Ovary (tissue), 10 donors: ENCODE measurements at regions of chr1 and their contacts with region 1.

Region 1: DNA sequence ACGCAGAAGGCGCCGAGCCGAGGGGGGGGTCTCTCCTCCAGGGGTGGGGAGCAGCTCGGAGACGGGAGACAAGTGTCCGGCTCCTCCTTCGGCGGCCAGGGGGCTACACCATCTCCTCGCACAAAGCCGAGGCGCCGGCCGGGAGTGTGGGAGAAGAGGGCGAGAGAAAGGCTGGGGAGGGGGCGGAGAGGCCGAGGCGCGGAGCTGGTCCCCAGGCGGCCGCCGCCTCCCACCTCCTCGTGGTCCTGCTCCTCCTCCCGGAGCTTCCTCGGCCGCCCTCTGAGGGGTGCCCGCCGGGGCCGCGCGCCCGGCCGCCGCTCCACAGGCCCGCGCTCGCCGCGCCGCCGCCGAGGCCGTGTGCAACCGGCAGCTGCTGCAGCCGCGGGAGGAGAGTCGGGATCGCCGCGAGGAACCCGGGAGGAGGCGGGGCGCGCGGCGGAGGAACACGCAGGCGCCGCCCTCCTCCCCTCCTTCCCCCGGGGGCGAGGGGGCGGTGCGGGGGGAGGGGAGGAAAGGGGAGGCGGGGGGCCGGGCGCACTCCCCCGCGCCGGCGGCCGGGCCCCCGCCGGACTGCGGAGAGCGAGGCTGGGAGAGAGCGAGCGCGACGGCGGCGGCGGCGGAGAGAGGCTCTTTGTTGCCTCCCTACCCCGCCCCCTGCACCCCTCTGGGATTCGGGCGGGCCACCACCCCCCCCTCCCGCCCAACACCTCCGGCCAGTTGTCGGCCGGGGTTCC is at the start of gene ENAH:
- DNase-seq: peak; percentile 87 to 92 (median 90)
- H3K4me3 ChIP-seq: peak within 1 kb of the TSS; percentile 94
- H3K27ac ChIP-seq: peak within 1 kb of the TSS; percentile 96 to 99
- H3K4me1 ChIP-seq: peaks cover 7% of the 10 kb centered on the region
- H3K27me3 ChIP-seq: no peaks in the 10 kb centered on the region
- CTCF ChIP-seq: peak in 2 of 3 donors; percentile 24 to 35
- EP300 ChIP-seq: no peak
- POLR2A ChIP-seq: peak; percentile 91
- total RNA-seq, gene ENAH: 33.4 to 112 (median 88.6) TPM

Region 2: GRCh38 chr1:225191199-225191753 is 461.6 kb before region 1 on chr1:
- intact Hi-C with region 1: no loop called
- DNase-seq: no peak
- H3K4me3 ChIP-seq: no peak overlapping the region
- H3K27ac ChIP-seq: no peak overlapping the region
- H3K4me1 ChIP-seq: no peaks in the 10 kb centered on the region
- H3K27me3 ChIP-seq: no peaks in the 10 kb centered on the region
- CTCF ChIP-seq: no peak
- EP300 ChIP-seq: no peak
- POLR2A ChIP-seq: no peak

Region 3: DNA sequence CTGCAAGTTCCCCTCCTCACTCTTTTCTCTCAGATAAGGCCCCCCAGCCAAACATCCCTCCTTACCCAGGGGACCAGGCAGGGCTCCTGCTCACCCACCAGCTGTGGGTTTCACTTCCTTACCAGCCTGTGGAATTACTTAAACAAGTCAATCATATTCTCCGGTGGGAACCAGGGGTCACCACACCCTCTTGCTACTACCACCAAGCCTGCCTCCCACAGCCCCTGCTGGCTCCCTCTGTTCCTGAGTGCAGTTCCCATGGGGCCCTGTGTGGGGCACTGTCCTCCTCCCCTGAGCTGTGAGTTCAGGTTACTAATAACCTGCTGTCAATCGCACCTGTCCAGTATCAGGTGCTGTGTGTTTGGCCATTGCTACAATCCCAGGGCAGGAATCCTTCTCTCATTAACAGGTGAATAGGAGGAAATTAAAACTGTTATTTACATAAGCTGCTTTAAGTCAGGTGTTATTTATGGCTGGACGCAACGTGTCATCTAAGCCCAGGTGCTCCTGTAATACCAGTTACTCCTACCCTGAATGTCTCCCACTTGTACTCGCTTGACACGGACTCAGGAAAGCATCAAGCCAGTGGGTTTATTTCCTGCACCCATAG is 172.0 kb before region 1 on chr1:
- intact Hi-C with region 1: loop called in 2 of 4 experiments (anchors 10 kb)
- DNase-seq: peak in 1 of 5 donors; percentile 3
- H3K4me3 ChIP-seq: no peak overlapping the region
- H3K27ac ChIP-seq: no peak overlapping the region
- H3K4me1 ChIP-seq: peaks cover 3% of the 10 kb centered on the region
- H3K27me3 ChIP-seq: no peaks in the 10 kb centered on the region
- CTCF ChIP-seq: no peak
- EP300 ChIP-seq: no peak
- POLR2A ChIP-seq: no peak

Region 4: GRCh38 chr1:225567590-225568194 is 85.2 kb before region 1 on chr1:
- intact Hi-C with region 1: loop called in 1 of 4 experiments (anchors 10 kb)
- DNase-seq: no peak
- H3K4me3 ChIP-seq: no peak overlapping the region
- H3K27ac ChIP-seq: no peak overlapping the region
- H3K4me1 ChIP-seq: peaks cover 2% of the 10 kb centered on the region
- H3K27me3 ChIP-seq: no peaks in the 10 kb centered on the region
- CTCF ChIP-seq: no peak
- EP300 ChIP-seq: no peak
- POLR2A ChIP-seq: no peak

Region 5: GRCh38 chr1:225766967-225767633 is 114.2 kb after region 1 on chr1:
- intact Hi-C with region 1: loop called (anchors 5 kb)
- DNase-seq: peak; percentile 71 to 77 (median 74)
- H3K4me3 ChIP-seq: no peak overlapping the region
- H3K27ac ChIP-seq: peak overlapping the region in 1 of 2 donors; percentile 85
- H3K4me1 ChIP-seq: peaks cover 43% of the 10 kb centered on the region
- H3K27me3 ChIP-seq: no peaks in the 10 kb centered on the region
- CTCF ChIP-seq: no peak
- EP300 ChIP-seq: no peak
- POLR2A ChIP-seq: no peak

Region 6: DNA sequence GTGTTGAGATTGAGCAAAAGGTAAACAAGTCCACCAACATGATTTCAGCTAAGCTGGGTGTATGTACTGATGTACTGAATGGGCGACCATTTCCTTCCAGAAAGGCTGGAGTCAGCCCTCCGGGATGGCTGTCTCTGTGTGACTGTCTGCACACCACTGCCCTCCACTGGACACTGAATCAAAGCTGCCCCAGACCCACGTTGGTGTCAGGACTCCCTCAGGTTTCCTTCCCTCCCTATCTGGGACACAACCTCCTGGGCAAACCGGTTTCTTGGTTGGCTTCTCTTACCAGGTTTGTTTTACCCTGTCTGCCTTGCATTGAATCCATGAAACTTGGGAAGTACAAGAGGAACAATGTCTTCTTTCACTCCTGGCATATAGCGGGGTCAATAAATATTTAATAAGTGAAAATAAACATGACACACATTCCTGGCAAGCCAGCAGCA is 119.5 kb after region 1 on chr1:
- intact Hi-C with region 1: loop called (anchors 5 kb)
- DNase-seq: peak; percentile 82 to 90 (median 86)
- H3K4me3 ChIP-seq: no peak overlapping the region
- H3K27ac ChIP-seq: peak overlapping the region in 1 of 2 donors; percentile 17
- H3K4me1 ChIP-seq: peaks cover 29% of the 10 kb centered on the region
- H3K27me3 ChIP-seq: no peaks in the 10 kb centered on the region
- CTCF ChIP-seq: peak; percentile 41 to 92 (median 81)
- EP300 ChIP-seq: no peak
- POLR2A ChIP-seq: no peak

Region 7: GRCh38 chr1:225835856-225836255 is 183.0 kb after region 1 on chr1:
- intact Hi-C with region 1: no loop called
- DNase-seq: peak; percentile 82 to 91 (median 84)
- H3K4me3 ChIP-seq: no peak overlapping the region
- H3K27ac ChIP-seq: peak overlapping the region in 1 of 2 donors; percentile 60
- H3K4me1 ChIP-seq: peaks cover 7% of the 10 kb centered on the region
- H3K27me3 ChIP-seq: no peaks in the 10 kb centered on the region
- CTCF ChIP-seq: no peak
- EP300 ChIP-seq: no peak
- POLR2A ChIP-seq: no peak

Region 8: GRCh38 chr1:225911191-225912130 is 258.6 kb after region 1 on chr1:
- intact Hi-C with region 1: loop called in 1 of 4 experiments (anchors 5 kb)
- DNase-seq: peak; percentile 61 to 86 (median 80)
- H3K4me3 ChIP-seq: no peak overlapping the region
- H3K27ac ChIP-seq: no peak overlapping the region
- H3K4me1 ChIP-seq: peaks cover 2% of the 10 kb centered on the region
- H3K27me3 ChIP-seq: no peaks in the 10 kb centered on the region
- CTCF ChIP-seq: peak; percentile 83 to 87 (median 85)
- EP300 ChIP-seq: no peak
- POLR2A ChIP-seq: no peak

Region 9: GRCh38 chr1:226062558-226063223 is 409.8 kb after region 1 on chr1 and contains the start of gene H3-3A:
- intact Hi-C with region 1: loop called in 1 of 4 experiments (anchors 5 kb)
- DNase-seq: peak; percentile 99 to 100 (median 100)
- H3K4me3 ChIP-seq: peak within 1 kb of the TSS; percentile 84
- H3K27ac ChIP-seq: peak within 1 kb of the TSS; percentile 95 to 99
- H3K4me1 ChIP-seq: peaks cover 3% of the 10 kb centered on the region
- H3K27me3 ChIP-seq: no peaks in the 10 kb centered on the region
- CTCF ChIP-seq: peak in 2 of 3 donors; percentile 39 to 46
- EP300 ChIP-seq: no peak
- POLR2A ChIP-seq: peak; percentile 96
- total RNA-seq, gene H3-3A: 266 to 526 (median 420) TPM

Region 10: GRCh38 chr1:227314014-227314848 is 1661.3 kb after region 1 on chr1:
- intact Hi-C with region 1: no loop called
- DNase-seq: no peak
- H3K4me3 ChIP-seq: peak overlapping the region; percentile 22
- H3K27ac ChIP-seq: no peak overlapping the region
- H3K4me1 ChIP-seq: no peaks in the 10 kb centered on the region
- H3K27me3 ChIP-seq: no peaks in the 10 kb centered on the region
- CTCF ChIP-seq: no peak
- EP300 ChIP-seq: no peak
- POLR2A ChIP-seq: no peak